ENCODE measurements at regions of chr2 and their contacts with region 1.

Region 1: DNA sequence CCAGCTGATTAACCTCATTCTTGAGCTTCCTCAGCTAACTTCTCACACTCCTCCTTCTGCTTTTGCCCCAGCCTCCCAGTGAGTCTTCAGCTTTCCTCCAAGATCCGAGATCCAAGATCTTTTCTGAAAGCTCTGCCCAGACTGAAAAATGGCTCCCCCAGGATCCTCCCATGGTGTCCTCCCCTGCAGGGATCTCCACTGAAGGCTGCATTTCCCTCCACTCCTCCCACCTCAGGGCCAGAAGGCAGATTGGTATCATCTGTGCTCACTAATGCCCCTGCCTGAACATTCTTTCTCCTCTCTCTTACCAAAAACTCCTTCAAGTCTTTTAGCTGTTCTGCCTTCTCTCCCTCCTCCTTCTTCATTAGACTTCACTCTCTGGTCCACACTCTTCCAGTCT is 6.1 kb upstream of the FOXI3 start:
- DNase-seq: no peak
- ATAC-seq: no peak
- H3K4me3 Mint-ChIP-seq: no peak overlapping the region
- H3K27ac Mint-ChIP-seq: no peak overlapping the region
- H3K4me1 Mint-ChIP-seq: peaks cover 11% of the 10 kb centered on the region
- H3K27me3 Mint-ChIP-seq: peaks cover 6% of the 10 kb centered on the region
- CTCF ChIP-seq: no peak

Region 2: DNA sequence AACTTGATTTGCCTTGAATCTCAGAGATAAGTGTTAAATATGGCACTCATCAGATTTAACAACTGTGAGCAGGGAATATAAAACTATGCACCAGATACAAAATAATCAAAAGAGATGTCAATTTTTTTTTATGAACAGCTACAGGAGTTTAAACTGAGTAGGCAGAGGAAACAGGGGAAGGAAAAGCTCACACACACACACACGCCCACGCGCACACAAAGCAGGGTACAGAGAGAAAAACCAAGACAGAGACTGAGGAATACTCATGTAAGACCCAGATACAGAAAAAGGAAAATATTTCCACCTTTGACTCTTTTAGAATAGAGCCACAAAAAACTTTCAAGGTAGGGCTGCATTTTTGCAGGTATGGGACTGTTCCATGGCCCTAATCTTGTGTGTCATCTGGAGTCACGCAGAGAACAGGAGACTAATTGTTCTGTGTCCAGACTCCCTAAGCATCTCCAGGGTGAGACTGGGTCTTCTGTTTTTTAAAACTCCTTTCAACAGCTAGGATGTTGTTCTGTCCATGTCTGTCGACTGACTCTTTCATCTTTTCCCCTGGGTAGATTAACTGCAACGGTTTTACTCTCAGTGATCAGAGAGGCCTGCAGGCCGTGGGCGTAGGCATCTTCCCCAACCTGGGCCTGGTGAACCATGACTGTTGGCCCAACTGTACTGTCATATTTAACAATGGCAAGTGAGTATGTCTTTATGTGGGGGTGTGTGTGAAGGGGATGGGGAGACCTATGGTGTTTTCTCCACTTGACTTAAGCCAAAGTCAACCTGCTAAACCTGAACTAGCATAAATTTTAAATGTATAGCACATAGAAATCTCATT is 368.0 kb before region 1 on chr2:
- CTCF ChIA-PET with region 1: no interaction called
- POLR2A ChIA-PET with region 1: interaction called, 11 read pairs
- DNase-seq: no peak
- ATAC-seq: no peak
- H3K4me3 Mint-ChIP-seq: no peak overlapping the region
- H3K27ac Mint-ChIP-seq: no peak overlapping the region
- H3K4me1 Mint-ChIP-seq: peaks cover 12% of the 10 kb centered on the region
- H3K27me3 Mint-ChIP-seq: no peaks in the 10 kb centered on the region
- CTCF ChIP-seq: no peak

Region 3: GRCh38 chr2:88429929-88430328 is 28.7 kb before region 1 on chr2:
- CTCF ChIA-PET with region 1: no interaction called
- POLR2A ChIA-PET with region 1: no interaction called
- DNase-seq: no peak
- ATAC-seq: peak; percentile 69
- H3K4me3 Mint-ChIP-seq: no peak overlapping the region
- H3K27ac Mint-ChIP-seq: 0 out of 2 replicates have a peak overlapping the region, but pooled peaks have one; percentile 3
- H3K4me1 Mint-ChIP-seq: peaks cover 6% of the 10 kb centered on the region
- H3K27me3 Mint-ChIP-seq: no peaks in the 10 kb centered on the region
- CTCF ChIP-seq: no peak

Region 4: GRCh38 chr2:88443353-88443938 is 15.2 kb before region 1 on chr2:
- CTCF ChIA-PET with region 1: no interaction called
- POLR2A ChIA-PET with region 1: no interaction called
- DNase-seq: peak; percentile 36
- ATAC-seq: peak; percentile 84
- H3K4me3 Mint-ChIP-seq: peak overlapping the region; percentile 47
- H3K27ac Mint-ChIP-seq: peak overlapping the region; percentile 72
- H3K4me1 Mint-ChIP-seq: peaks cover 45% of the 10 kb centered on the region
- H3K27me3 Mint-ChIP-seq: peaks cover 17% of the 10 kb centered on the region
- CTCF ChIP-seq: no peak

Region 5: DNA sequence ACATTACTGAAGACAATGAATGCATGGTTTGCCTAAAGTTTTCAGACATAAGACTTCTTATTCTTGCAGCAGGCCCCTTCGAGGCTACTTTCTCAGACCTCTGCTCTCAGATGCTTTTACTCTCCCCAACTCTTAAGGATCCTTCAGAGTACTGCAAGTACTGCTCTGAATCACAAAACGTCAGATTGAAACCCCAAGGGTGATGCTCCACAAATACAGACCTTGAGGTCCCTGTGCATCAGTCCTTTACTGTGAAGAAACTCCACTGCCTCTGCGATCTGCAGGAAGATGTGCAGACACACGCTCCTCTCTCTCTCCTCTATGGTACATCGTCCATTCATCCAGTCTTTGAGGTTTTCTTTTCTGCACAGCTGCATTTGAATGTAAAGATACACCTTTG is 115.8 kb after region 1 on chr2:
- CTCF ChIA-PET with region 1: no interaction called
- POLR2A ChIA-PET with region 1: no interaction called
- DNase-seq: no peak
- ATAC-seq: no peak
- H3K4me3 Mint-ChIP-seq: no peak overlapping the region
- H3K27ac Mint-ChIP-seq: no peak overlapping the region
- H3K4me1 Mint-ChIP-seq: no peaks in the 10 kb centered on the region
- H3K27me3 Mint-ChIP-seq: no peaks in the 10 kb centered on the region
- CTCF ChIP-seq: no peak